Activated CD4-positive, alpha-beta memory T cell treated with anti-CD3 and anti-CD28 coated beads for 36 hours (primary cell): ENCODE measurements at regions of chr6 and their contacts with region 1.

Region 1: GRCh38 chr6:73180763-73181619 is 44.3 kb downstream of the KHDC1L start:
- DNase-seq: no peak
- H3K4me3 Mint-ChIP-seq: no peak overlapping the region
- H3K27ac Mint-ChIP-seq: no peak overlapping the region
- H3K4me1 Mint-ChIP-seq: no peaks in the 10 kb centered on the region
- H3K27me3 Mint-ChIP-seq: no peaks in the 10 kb centered on the region

Region 2: DNA sequence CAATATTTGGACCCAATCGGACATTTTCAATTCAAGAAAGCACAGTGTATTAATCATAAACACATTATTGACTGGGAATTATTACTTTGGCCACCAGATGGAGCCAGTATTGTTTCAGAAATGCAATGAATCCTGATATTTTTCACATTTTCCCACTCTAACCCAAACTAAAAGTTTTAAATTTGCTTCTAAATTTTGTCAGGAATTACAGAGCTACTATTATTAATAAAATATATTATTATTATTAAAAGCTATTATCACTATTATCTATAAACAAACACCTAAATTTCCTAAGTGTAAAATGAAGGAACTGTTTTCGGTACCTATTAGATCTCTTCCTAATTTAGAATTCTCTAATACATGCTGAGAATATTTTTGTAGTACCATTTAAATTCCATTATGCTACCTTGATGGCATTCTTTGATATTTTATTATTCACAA is 1647.0 kb before region 1 on chr6:
- CTCF ChIA-PET with region 1: no interaction called
- POLR2A ChIA-PET with region 1: no interaction called
- intact Hi-C with region 1: loop called (anchors 5 kb)
- DNase-seq: no peak
- H3K4me3 Mint-ChIP-seq: no peak overlapping the region
- H3K27ac Mint-ChIP-seq: no peak overlapping the region
- H3K4me1 Mint-ChIP-seq: no peaks in the 10 kb centered on the region
- H3K27me3 Mint-ChIP-seq: no peaks in the 10 kb centered on the region

Region 3: GRCh38 chr6:72411872-72412708 is 768.9 kb before region 1 on chr6:
- CTCF ChIA-PET with region 1: interaction called, 7 read pairs
- POLR2A ChIA-PET with region 1: no interaction called
- intact Hi-C with region 1: loop called (anchors 1 kb)
- DNase-seq: peak; percentile 85
- H3K4me3 Mint-ChIP-seq: no peak overlapping the region
- H3K27ac Mint-ChIP-seq: no peak overlapping the region
- H3K4me1 Mint-ChIP-seq: no peaks in the 10 kb centered on the region
- H3K27me3 Mint-ChIP-seq: no peaks in the 10 kb centered on the region

Region 4: DNA sequence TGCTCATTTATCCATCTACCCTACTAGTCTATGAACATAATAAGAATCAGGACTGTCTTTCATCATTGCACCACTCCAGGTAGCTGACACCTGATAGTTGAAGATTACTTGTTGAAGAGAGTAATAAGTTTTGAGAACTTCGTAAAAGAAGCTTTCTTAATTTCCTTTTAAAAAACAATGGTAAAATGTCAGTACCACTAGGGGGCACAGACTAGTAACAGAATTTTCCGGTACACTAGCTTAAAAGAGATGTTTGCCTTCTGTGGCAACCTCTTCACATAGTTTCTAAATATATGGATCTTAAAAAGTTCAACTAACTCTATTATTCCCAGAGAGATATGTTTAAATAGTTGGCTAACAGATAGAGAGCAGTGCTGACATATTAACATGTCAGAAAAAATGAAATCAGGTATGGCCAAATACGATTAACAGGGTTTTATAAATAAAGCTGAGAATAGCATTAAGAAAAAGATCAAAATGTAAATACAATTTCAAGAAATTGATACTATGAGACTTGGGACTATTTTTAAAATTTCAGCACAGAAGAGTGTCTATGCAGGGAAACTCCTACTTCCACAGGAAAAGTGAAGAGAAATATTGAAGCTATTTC is 564.5 kb before region 1 on chr6:
- CTCF ChIA-PET with region 1: interaction called, 11 read pairs
- POLR2A ChIA-PET with region 1: no interaction called
- intact Hi-C with region 1: loop called (anchors 1 kb)
- DNase-seq: no peak
- H3K4me3 Mint-ChIP-seq: no peak overlapping the region
- H3K27ac Mint-ChIP-seq: no peak overlapping the region
- H3K4me1 Mint-ChIP-seq: peaks cover 43% of the 10 kb centered on the region
- H3K27me3 Mint-ChIP-seq: peaks cover 2% of the 10 kb centered on the region

Region 5: GRCh38 chr6:72841195-72841594 is 339.8 kb before region 1 on chr6:
- CTCF ChIA-PET with region 1: no interaction called
- POLR2A ChIA-PET with region 1: no interaction called
- intact Hi-C with region 1: no loop called
- DNase-seq: no peak
- H3K4me3 Mint-ChIP-seq: no peak overlapping the region
- H3K27ac Mint-ChIP-seq: no peak overlapping the region
- H3K4me1 Mint-ChIP-seq: no peaks in the 10 kb centered on the region
- H3K27me3 Mint-ChIP-seq: no peaks in the 10 kb centered on the region

Region 6: DNA sequence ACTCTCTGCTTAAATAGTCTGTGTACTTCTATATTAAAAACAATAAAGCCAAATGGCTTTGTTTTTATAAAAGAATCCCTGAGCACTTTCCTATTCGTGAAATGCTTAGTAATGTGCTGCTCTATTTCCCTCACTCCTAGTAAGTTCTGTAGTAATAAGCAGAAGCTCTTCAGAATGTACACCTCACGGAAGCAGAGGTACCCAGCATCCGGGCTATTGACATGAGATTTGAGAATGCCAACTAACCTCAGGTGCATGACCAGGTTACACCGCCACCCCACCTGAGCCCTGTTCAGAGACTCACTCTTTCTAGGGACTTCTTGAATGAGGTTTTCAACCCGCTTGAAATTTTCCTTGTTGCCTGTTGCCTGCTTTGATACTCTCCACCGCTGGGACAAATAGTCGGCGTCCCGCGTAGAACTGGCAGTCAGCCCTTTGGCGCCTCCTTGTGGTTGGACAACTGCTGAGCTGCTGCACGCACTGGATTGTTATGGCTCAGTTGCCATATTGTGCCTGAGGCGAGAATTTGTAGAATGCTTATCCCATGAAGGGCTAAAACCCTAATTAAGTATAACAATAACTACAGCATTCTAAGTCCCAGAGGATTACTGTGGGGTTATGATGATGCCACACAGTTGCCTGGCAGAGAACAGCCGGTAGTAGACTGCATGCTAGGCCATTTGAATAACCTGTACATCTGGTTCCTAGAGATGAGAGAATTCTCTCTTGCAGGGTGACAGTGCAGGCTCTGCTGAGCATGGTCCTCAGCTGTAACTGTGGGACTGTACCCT is 51.1 kb before region 1 on chr6:
- CTCF ChIA-PET with region 1: interaction called, 4 read pairs
- POLR2A ChIA-PET with region 1: no interaction called
- intact Hi-C with region 1: loop called (anchors 2 kb)
- DNase-seq: peak; percentile 87
- H3K4me3 Mint-ChIP-seq: no peak overlapping the region
- H3K27ac Mint-ChIP-seq: no peak overlapping the region
- H3K4me1 Mint-ChIP-seq: no peaks in the 10 kb centered on the region
- H3K27me3 Mint-ChIP-seq: peaks cover 1% of the 10 kb centered on the region

Region 7: GRCh38 chr6:73156832-73157773 is 23.9 kb before region 1 on chr6:
- CTCF ChIA-PET with region 1: no interaction called
- POLR2A ChIA-PET with region 1: no interaction called
- intact Hi-C with region 1: no loop called
- DNase-seq: no peak
- H3K4me3 Mint-ChIP-seq: no peak overlapping the region
- H3K27ac Mint-ChIP-seq: no peak overlapping the region
- H3K4me1 Mint-ChIP-seq: no peaks in the 10 kb centered on the region
- H3K27me3 Mint-ChIP-seq: no peaks in the 10 kb centered on the region

Region 8: DNA sequence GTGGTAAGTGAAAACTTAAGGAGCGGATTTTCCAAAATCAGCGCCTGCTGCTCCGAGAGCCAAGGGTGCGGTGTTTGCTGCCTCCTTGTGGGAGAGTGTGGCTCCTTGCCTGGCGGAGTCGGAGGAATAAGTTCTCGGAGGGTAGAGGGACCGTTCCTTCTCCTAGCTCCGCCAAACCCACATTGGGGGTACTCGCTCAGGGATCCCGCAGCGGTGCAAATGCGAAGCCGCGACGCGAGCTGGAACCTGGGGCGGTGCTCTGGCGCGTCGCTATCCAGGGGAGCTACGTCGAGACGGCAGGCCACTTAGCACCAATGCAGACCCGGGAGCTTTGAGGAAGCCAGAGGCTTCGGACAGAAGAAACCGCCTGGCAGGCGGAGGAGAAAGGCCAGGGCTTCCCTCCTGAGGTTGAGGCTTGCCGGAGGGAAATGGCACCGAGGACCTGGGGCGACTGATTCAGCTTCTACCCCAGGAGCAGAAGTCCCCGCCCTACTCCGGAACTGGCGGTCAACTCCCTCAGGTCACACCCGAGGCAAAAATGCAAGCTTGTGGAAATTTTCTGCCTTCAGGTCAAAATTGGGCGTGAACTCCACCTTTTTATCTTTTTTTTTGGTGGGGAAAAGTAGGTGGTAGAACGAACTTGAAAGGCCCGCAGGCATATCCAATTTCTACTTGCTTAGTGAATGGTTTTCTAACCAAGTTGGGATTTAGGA is 208.0 kb after region 1 on chr6:
- CTCF ChIA-PET with region 1: no interaction called
- POLR2A ChIA-PET with region 1: no interaction called
- intact Hi-C with region 1: loop called (anchors 2 kb)
- DNase-seq: peak; percentile 78
- H3K4me3 Mint-ChIP-seq: peak overlapping the region; percentile 83
- H3K27ac Mint-ChIP-seq: peak overlapping the region; percentile 69
- H3K4me1 Mint-ChIP-seq: peaks cover 17% of the 10 kb centered on the region
- H3K27me3 Mint-ChIP-seq: no peaks in the 10 kb centered on the region